Breast epithelium (tissue), 4 donors: ENCODE measurements at regions of chr14 and their contacts with region 1.

Region 1: DNA sequence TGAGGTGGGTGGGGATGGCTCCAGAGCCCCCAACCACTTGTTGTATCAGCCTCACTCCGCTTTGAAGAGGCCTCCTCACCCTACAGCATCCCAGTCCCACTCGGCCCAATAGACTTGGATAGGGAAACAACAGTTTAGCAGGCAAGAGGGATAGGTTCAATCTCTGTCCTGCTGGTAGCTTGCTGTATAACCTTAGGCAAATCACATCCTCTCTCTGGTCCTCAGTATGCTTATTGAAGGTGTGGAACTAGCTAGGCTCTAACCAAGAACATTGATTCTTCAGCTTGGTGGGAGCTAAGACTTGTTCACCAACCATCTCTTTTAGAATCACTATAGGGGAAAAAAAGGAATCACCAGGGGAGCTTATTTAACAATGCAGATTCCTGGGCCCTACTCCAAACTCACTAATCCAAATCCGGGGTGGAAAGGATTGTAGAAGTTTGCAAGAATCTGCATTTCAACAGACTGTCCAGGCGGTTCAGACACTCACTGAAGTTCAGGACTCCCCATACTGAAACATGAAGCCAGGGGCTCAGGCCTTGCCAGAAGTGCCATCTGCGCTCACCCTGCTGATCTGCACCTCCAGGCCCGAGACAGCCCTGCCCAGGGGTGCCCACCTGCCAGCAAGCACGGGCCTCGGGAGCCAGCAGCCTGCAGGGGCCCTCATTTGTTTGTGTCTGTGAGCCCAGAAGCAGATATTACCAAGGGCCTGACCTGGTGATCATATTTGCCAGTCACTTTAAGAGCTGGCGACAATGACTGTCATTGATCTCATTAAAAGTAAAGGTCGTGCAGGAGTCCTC is 113.0 kb downstream of the ADCK1 start:
- DNase-seq: no peak
- H3K4me3 ChIP-seq: no peak overlapping the region
- H3K27ac ChIP-seq: no peak overlapping the region
- H3K4me1 ChIP-seq: no peaks in the 10 kb centered on the region
- H3K27me3 ChIP-seq: no peaks in the 10 kb centered on the region
- CTCF ChIP-seq: no peak
- POLR2A ChIP-seq: no peak

Region 2: DNA sequence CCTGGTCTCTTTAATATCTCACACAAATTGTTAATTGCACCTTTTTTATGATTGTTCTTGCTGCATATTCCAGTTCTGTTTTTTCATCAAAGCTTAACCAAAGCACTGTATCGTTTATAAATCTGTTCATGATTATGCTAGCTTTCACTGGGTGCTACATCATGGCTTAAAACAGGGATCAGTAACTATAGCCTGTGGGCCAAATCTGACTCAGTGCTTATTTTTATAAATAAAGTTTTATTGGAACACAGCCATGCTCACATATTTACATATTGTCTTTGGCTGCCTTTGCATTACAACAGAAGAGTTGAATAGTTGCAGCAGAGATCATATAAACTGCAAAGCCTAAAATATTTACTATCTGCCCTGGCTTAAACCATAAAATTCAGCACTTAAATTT is 73.8 kb after region 1 on chr14:
- intact Hi-C with region 1: loop called (anchors 2 kb)
- DNase-seq: no peak
- H3K4me3 ChIP-seq: no peak overlapping the region
- H3K27ac ChIP-seq: no peak overlapping the region
- H3K4me1 ChIP-seq: no peaks in the 10 kb centered on the region
- H3K27me3 ChIP-seq: no peaks in the 10 kb centered on the region
- CTCF ChIP-seq: no peak
- POLR2A ChIP-seq: no peak